Mammary epithelial cell (primary cell): ENCODE measurements at regions of chr1 and their contacts with region 1.

Region 1: GRCh38 chr1:175043824-175044223 is 20.6 kb upstream of the MRPS14 start:
- DNase-seq: no peak
- H3K4me3 ChIP-seq: no peak overlapping the region
- H3K27ac ChIP-seq: no peak overlapping the region
- H3K4me1 ChIP-seq: no peaks in the 10 kb centered on the region
- H3K27me3 ChIP-seq: peaks cover 2% of the 10 kb centered on the region
- CTCF ChIP-seq: no peak

Region 2: GRCh38 chr1:175062858-175063257 is 19.0 kb after region 1 on chr1:
- CTCF ChIA-PET with region 1: no interaction called
- dilution Hi-C with region 1: no loop called
- in situ Hi-C with region 1: no loop called
- intact Hi-C with region 1: no loop called
- DNase-seq: peak; percentile 4
- H3K4me3 ChIP-seq: no peak overlapping the region
- H3K27ac ChIP-seq: no peak overlapping the region
- H3K4me1 ChIP-seq: no peaks in the 10 kb centered on the region
- H3K27me3 ChIP-seq: no peaks in the 10 kb centered on the region
- CTCF ChIP-seq: no peak

Region 3: GRCh38 chr1:175319418-175320230 is 275.8 kb after region 1 on chr1:
- CTCF ChIA-PET with region 1: no interaction called
- dilution Hi-C with region 1: no loop called
- in situ Hi-C with region 1: loop called (anchors 25 kb)
- intact Hi-C with region 1: no loop called
- DNase-seq: peak; percentile 51
- H3K4me3 ChIP-seq: no peak overlapping the region
- H3K27ac ChIP-seq: no peak overlapping the region
- H3K4me1 ChIP-seq: peaks cover 7% of the 10 kb centered on the region
- H3K27me3 ChIP-seq: no peaks in the 10 kb centered on the region
- CTCF ChIP-seq: peak; percentile 83 to 96